ENCODE measurements at regions of chr12 and their contacts with region 1.

Region 1: DNA sequence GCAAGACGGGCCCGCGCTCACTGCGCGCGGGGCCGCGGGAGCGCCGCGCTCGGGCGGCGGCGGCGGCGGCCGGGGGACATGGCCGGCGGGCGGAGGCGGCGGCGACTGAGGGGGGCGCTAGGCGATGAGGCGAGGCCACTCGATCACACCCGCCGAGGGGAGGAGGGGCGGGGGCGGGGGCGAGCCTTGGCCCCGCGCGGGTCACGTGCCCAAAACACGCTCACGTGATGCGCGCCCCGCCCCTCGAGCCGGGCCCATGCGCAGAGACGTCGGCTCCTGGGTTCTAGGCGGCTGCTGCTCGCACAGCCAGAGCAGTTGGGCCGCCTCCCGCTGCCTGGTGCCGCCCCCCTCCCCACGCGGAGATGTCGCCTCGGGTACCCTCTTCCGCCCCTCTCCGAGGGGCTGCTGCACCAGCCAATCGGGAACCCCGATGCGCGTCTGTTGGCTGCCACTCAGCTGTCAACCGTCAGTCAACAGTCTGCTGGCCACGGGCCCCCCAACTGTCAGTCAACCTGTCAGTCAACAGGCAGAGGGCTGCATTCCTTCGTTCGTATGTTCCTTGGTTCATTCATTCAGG is at the start of gene SPPL3:
- DNase-seq: peak; percentile 94
- ATAC-seq: peak; percentile 83
- H3K4me3 ChIP-seq: peak within 1 kb of the TSS; percentile 32 to 85 (median 75)
- H3K4me3 Mint-ChIP-seq: peak within 1 kb of the TSS; percentile 97
- H3K27ac ChIP-seq: peak within 1 kb of the TSS; percentile 54 to 80
- H3K27ac Mint-ChIP-seq: peak within 1 kb of the TSS; percentile 95
- H3K4me1 ChIP-seq: peaks cover 19 to 24% of the 10 kb centered on the region in 2 donors
- H3K4me1 Mint-ChIP-seq: peaks cover 29% of the 10 kb centered on the region
- H3K27me3 ChIP-seq: no peaks in the 10 kb centered on the region
- H3K27me3 Mint-ChIP-seq: no peaks in the 10 kb centered on the region
- CTCF ChIP-seq: no peak
- total RNA-seq, gene SPPL3: 43.6 and 53.7 TPM in 2 replicates

Region 2: GRCh38 chr12:120710031-120710804 is 194.1 kb before region 1 on chr12 and contains the start of gene UNC119B:
- CTCF ChIA-PET with region 1: interaction called, 3 read pairs
- POLR2A ChIA-PET with region 1: no interaction called
- intact Hi-C with region 1: loop called (anchors 5 kb)
- DNase-seq: peak; percentile 80
- ATAC-seq: peak; percentile 88
- H3K4me3 ChIP-seq: peak within 1 kb of the TSS; percentile 27 to 89 (median 68)
- H3K4me3 Mint-ChIP-seq: peak within 1 kb of the TSS; percentile 91
- H3K27ac ChIP-seq: peak within 1 kb of the TSS in 1 of 2 donors; percentile 71
- H3K27ac Mint-ChIP-seq: peak within 1 kb of the TSS; percentile 79
- H3K4me1 ChIP-seq: peaks cover 17 to 26% of the 10 kb centered on the region in 2 donors
- H3K4me1 Mint-ChIP-seq: peaks cover 24% of the 10 kb centered on the region
- H3K27me3 ChIP-seq: no peaks in the 10 kb centered on the region
- H3K27me3 Mint-ChIP-seq: no peaks in the 10 kb centered on the region
- CTCF ChIP-seq: no peak
- total RNA-seq, gene UNC119B: 19.2 and 22.7 TPM in 2 replicates

Region 3: DNA sequence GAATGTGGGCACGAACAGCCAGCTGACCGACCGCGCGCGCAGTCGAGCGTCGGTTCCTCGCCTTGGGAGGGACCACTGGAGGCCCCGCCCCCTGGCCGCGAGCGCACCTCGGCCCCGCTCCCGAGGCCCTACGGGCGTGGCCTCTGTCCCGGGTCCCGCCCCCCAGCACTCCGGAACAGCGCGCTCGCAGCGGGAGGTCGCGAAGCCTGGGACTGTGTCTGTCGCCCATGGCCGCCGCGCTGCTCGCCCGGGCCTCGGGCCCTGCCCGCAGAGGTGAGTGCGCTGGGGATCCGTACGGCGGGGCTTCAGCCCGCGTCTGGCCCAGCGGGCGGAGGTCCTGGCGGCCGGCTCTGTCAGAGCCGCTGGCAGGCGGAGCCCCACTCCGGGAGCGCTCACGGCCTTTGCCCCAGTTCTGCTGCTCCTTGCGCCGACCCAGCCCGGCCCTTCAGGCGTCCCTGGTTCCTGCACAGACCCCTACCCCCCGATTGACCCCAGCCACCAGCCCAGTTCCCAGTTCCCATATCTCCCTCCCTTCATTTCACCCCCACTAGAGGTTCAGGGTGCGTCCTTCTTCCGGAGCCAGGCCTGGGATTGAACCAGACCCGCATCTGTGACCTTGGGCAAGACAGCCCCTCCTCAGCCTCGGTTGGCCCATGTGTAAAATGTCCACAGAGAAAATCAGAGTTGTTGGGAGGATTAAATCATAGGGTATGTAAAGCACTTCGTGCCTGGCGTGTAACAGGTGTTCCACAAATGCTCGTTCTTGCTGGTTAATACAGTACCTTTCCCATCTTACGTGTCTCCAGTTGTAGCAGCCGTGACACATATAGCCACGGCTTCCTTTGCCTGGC is 178.4 kb before region 1 on chr12 and contains the start of gene ACADS:
- CTCF ChIA-PET with region 1: no interaction called
- POLR2A ChIA-PET with region 1: no interaction called
- intact Hi-C with region 1: loop called (anchors 5 kb)
- DNase-seq: peak; percentile 91
- ATAC-seq: peak; percentile 100
- H3K4me3 ChIP-seq: peak within 1 kb of the TSS; percentile 44 to 73 (median 63)
- H3K4me3 Mint-ChIP-seq: peak within 1 kb of the TSS; percentile 90
- H3K27ac ChIP-seq: peak within 1 kb of the TSS in 1 of 2 donors; percentile 61
- H3K27ac Mint-ChIP-seq: peak within 1 kb of the TSS; percentile 46
- H3K4me1 ChIP-seq: peaks cover 28 to 30% of the 10 kb centered on the region in 2 donors
- H3K4me1 Mint-ChIP-seq: peaks cover 34% of the 10 kb centered on the region
- H3K27me3 ChIP-seq: no peaks in the 10 kb centered on the region
- H3K27me3 Mint-ChIP-seq: no peaks in the 10 kb centered on the region
- CTCF ChIP-seq: no peak
- total RNA-seq, gene ACADS: 10.0 and 10.1 TPM in 2 replicates

Region 4: DNA sequence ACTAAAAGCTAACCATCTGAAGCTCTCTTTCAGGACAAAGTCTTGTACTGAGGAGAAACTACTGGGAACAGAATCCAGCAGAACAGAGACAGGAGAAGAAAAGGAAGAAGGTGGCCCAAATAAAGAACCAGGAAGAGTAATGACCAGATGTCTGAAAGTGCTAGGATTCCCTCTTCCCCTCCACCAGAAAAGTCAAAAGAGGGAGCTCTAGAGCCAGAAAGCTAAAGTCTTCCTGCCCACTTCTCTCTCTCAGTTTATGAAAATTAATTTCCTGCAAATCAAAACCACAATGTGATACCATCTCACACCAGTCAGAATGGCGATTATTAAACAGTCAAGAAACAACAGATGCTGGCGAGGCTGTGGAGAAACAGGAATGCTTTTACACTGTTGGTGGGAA is 47.3 kb before region 1 on chr12:
- CTCF ChIA-PET with region 1: interaction called, 3 read pairs
- POLR2A ChIA-PET with region 1: no interaction called
- intact Hi-C with region 1: loop called (anchors 5 kb)
- DNase-seq: peak; percentile 58
- ATAC-seq: peak; percentile 43
- H3K4me3 ChIP-seq: no peak overlapping the region
- H3K4me3 Mint-ChIP-seq: peak overlapping the region; percentile 61
- H3K27ac ChIP-seq: peak overlapping the region in 1 of 2 donors; percentile 50
- H3K27ac Mint-ChIP-seq: peak overlapping the region; percentile 43
- H3K4me1 ChIP-seq: peaks cover 42 to 50% of the 10 kb centered on the region in 2 donors
- H3K4me1 Mint-ChIP-seq: peaks cover 64% of the 10 kb centered on the region
- H3K27me3 ChIP-seq: no peaks in the 10 kb centered on the region
- H3K27me3 Mint-ChIP-seq: no peaks in the 10 kb centered on the region
- CTCF ChIP-seq: peak; percentile 22

Region 5: DNA sequence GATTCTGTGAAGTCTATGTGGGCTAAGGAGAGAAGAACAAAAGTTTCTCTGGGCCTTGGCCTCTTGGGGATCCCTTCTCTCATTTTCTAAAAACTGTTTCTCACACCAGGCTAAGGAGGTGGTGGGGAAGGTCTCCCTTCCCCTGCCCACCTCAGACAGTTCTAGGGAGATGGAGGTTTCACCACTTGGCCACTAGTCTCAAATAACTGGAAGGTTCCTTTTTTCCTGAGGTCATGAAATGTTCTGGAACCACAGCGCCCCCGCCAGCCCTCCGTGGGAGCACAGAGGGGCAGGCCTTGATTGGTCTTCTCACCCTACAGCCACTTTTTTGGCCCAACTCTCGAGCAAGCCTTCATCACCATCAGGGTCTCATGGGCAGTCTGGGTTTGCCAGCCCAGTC is 99.4 kb after region 1 on chr12:
- CTCF ChIA-PET with region 1: no interaction called
- POLR2A ChIA-PET with region 1: no interaction called
- intact Hi-C with region 1: no loop called
- DNase-seq: no peak
- ATAC-seq: no peak
- H3K4me3 ChIP-seq: no peak overlapping the region
- H3K4me3 Mint-ChIP-seq: no peak overlapping the region
- H3K27ac ChIP-seq: no peak overlapping the region
- H3K27ac Mint-ChIP-seq: no peak overlapping the region
- H3K4me1 ChIP-seq: no peaks in the 10 kb centered on the region
- H3K4me1 Mint-ChIP-seq: no peaks in the 10 kb centered on the region
- H3K27me3 ChIP-seq: no peaks in the 10 kb centered on the region
- H3K27me3 Mint-ChIP-seq: no peaks in the 10 kb centered on the region
- CTCF ChIP-seq: no peak

Region 6: GRCh38 chr12:121015825-121016766 is 111.8 kb after region 1 on chr12 and contains the start of gene C12orf43:
- CTCF ChIA-PET with region 1: no interaction called
- POLR2A ChIA-PET with region 1: interaction called, 5 read pairs
- intact Hi-C with region 1: loop called (anchors 5 kb)
- DNase-seq: peak; percentile 92
- ATAC-seq: peak; percentile 99
- H3K4me3 ChIP-seq: peak within 1 kb of the TSS; percentile 86 to 100 (median 96)
- H3K4me3 Mint-ChIP-seq: peak within 1 kb of the TSS; percentile 96
- H3K27ac ChIP-seq: peak within 1 kb of the TSS; percentile 61 to 74
- H3K27ac Mint-ChIP-seq: peak within 1 kb of the TSS; percentile 84
- H3K4me1 ChIP-seq: peaks cover 4 to 7% of the 10 kb centered on the region in 2 donors
- H3K4me1 Mint-ChIP-seq: peaks cover 14% of the 10 kb centered on the region
- H3K27me3 ChIP-seq: no peaks in the 10 kb centered on the region
- H3K27me3 Mint-ChIP-seq: no peaks in the 10 kb centered on the region
- CTCF ChIP-seq: no peak
- total RNA-seq, gene C12orf43: 18.9 and 20.5 TPM in 2 replicates